CD14-positive monocyte (primary cell): ENCODE measurements at regions of chr3 and their contacts with region 1.

Region 1: GRCh38 chr3:5304789-5305683 is 117.5 kb downstream of the EDEM1 start:
- DNase-seq: peak; percentile 27 to 42 (median 42)
- H3K4me3 ChIP-seq: no peak overlapping the region
- H3K4me3 Mint-ChIP-seq: no peak overlapping the region
- H3K27ac ChIP-seq: no peak overlapping the region
- H3K27ac Mint-ChIP-seq: no peak overlapping the region
- H3K4me1 ChIP-seq: no peaks in the 10 kb centered on the region
- H3K4me1 Mint-ChIP-seq: peaks cover 4% of the 10 kb centered on the region
- H3K27me3 ChIP-seq: no peaks in the 10 kb centered on the region
- H3K27me3 Mint-ChIP-seq: peaks cover 1 to 3% (median 2%) of the 10 kb centered on the region in 3 donors
- CTCF ChIP-seq: peak; percentile 84

Region 2: GRCh38 chr3:5205165-5205941 is 99.7 kb before region 1 on chr3:
- intact Hi-C with region 1: no loop called
- DNase-seq: peak in 1 of 3 donors; percentile 42
- H3K4me3 ChIP-seq: no peak overlapping the region
- H3K4me3 Mint-ChIP-seq: no peak overlapping the region
- H3K27ac ChIP-seq: peak overlapping the region in 1 of 2 donors; percentile 39
- H3K27ac Mint-ChIP-seq: peak overlapping the region in 3 of 7 donors; percentile 69 to 75 (median 75)
- H3K4me1 ChIP-seq: no peaks in the 10 kb centered on the region
- H3K4me1 Mint-ChIP-seq: no peaks in the 10 kb centered on the region
- H3K27me3 ChIP-seq: no peaks in the 10 kb centered on the region
- H3K27me3 Mint-ChIP-seq: no peaks in the 10 kb centered on the region
- CTCF ChIP-seq: no peak

Region 3: GRCh38 chr3:5366746-5367145 is 61.7 kb after region 1 on chr3:
- intact Hi-C with region 1: no loop called
- DNase-seq: no peak
- H3K4me3 ChIP-seq: no peak overlapping the region
- H3K4me3 Mint-ChIP-seq: no peak overlapping the region
- H3K27ac ChIP-seq: no peak overlapping the region
- H3K27ac Mint-ChIP-seq: no peak overlapping the region
- H3K4me1 ChIP-seq: no peaks in the 10 kb centered on the region
- H3K4me1 Mint-ChIP-seq: peaks cover 2% of the 10 kb centered on the region
- H3K27me3 ChIP-seq: no peaks in the 10 kb centered on the region
- H3K27me3 Mint-ChIP-seq: peaks cover 0 to 1% (median 0%) of the 10 kb centered on the region in 3 donors
- CTCF ChIP-seq: no peak

Region 4: GRCh38 chr3:5731094-5731493 is 426.1 kb after region 1 on chr3:
- intact Hi-C with region 1: loop called in 1 of 2 experiments (anchors 10 kb)
- DNase-seq: peak; percentile 7 to 36 (median 28)
- H3K4me3 ChIP-seq: no peak overlapping the region
- H3K4me3 Mint-ChIP-seq: no peak overlapping the region
- H3K27ac ChIP-seq: no peak overlapping the region
- H3K27ac Mint-ChIP-seq: no peak overlapping the region
- H3K4me1 ChIP-seq: no peaks in the 10 kb centered on the region
- H3K4me1 Mint-ChIP-seq: peaks cover 14% of the 10 kb centered on the region
- H3K27me3 ChIP-seq: no peaks in the 10 kb centered on the region
- H3K27me3 Mint-ChIP-seq: no peaks in the 10 kb centered on the region
- CTCF ChIP-seq: peak; percentile 64